ENCODE measurements at regions of chr16 and their contacts with region 1.

Region 1: DNA sequence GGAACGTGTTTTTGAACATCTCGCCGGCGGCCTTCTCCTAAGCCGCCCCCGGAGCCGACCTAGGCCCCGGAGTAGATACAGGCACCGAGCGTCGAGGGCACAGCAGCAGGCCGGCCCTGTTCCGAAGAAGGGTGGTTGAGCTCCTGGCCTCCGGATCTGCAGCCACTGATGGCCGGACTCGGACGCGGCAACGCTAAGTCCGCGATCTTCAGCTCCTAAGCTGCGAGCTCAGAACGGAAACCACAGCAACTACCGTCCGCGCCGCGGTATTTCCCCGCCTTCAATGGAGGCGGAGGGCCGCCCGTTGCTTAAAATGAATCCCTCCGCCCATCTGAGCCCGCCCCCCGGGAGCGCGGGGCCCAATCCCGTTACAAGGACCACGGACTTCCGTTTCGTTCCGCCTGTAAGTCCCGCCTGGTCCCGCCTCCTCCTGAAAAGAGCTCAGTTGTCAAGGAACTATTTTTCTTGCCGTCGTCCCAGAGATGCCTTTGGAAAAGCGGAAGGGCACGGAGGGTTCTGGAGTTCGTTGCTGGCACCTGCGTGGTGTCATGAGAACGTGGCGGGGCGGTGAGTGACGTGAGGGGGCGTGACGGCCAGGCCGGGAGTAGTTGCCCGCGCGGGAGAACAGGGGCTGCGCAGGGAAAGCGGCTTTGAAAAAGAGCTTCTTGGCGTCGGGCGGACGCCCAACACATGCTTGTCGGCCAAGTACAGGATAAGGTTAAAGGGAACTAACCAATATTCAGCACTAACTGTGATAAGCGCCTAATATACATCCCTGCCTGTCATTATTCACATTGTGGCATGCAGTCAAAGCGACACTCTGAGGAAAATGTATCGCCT is at the start of gene CFAP20:
- DNase-seq: peak; percentile 96 to 100 (median 96)
- ATAC-seq: peak; percentile 90
- H3K4me3 ChIP-seq: peak within 1 kb of the TSS; percentile 93
- H3K27ac ChIP-seq: peak within 1 kb of the TSS; percentile 91
- H3K4me1 ChIP-seq: peaks cover 17 to 24% of the 10 kb centered on the region in 2 experiments; a peak in 4 of 5 replicates
- H3K27me3 ChIP-seq: no peaks in the 10 kb centered on the region
- CTCF ChIP-seq: no peak
- EP300 ChIP-seq: peak; percentile 79
- POLR2A ChIP-seq: peak; percentile 86
- RAD21 ChIP-seq: no peak
- polyA plus RNA-seq, gene CFAP20: 20.5 to 30.4 TPM

Region 2: GRCh38 chr16:58011652-58012051 is 117.7 kb before region 1 on chr16:
- CTCF ChIA-PET with region 1: no interaction called
- POLR2A ChIA-PET with region 1: no interaction called
- in situ Hi-C with region 1: loop called (anchors 10 kb)
- intact Hi-C with region 1: no loop called
- DNase-seq: no peak
- ATAC-seq: no peak
- H3K4me3 ChIP-seq: no peak overlapping the region
- H3K27ac ChIP-seq: no peak overlapping the region
- H3K4me1 ChIP-seq: no peaks in the 10 kb centered on the region
- H3K27me3 ChIP-seq: no peaks in the 10 kb centered on the region
- CTCF ChIP-seq: no peak
- EP300 ChIP-seq: no peak
- POLR2A ChIP-seq: no peak
- RAD21 ChIP-seq: no peak

Region 3: DNA sequence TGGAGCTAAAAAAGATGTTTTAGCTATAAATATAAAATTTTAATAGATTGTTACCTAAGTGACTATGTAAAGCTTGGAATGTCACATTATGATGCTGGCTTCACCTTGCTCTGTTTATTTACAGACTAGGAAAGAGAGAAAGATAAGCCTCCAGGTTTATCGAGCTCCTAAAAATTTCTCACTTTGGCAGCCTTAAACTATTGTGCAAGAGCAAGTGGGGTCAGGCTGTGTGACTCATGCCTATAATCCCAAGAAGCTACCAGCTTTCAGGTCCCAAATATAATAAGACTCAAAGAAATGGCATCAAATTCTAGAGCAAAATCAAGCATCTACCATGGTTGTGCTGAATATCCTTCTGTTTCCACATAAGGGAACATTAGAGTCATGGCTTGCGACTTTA is 199.8 kb after region 1 on chr16:
- CTCF ChIA-PET with region 1: no interaction called
- POLR2A ChIA-PET with region 1: no interaction called
- in situ Hi-C with region 1: no loop called
- intact Hi-C with region 1: no loop called
- DNase-seq: no peak
- ATAC-seq: no peak
- H3K4me3 ChIP-seq: no peak overlapping the region
- H3K27ac ChIP-seq: no peak overlapping the region
- H3K4me1 ChIP-seq: no peaks in the 10 kb centered on the region; a peak in 1 of 5 replicates
- H3K27me3 ChIP-seq: peaks cover 2 to 4% of the 10 kb centered on the region in 2 experiments; a peak in 2 of 5 replicates
- CTCF ChIP-seq: no peak
- EP300 ChIP-seq: no peak
- POLR2A ChIP-seq: no peak
- RAD21 ChIP-seq: no peak

Region 4: DNA sequence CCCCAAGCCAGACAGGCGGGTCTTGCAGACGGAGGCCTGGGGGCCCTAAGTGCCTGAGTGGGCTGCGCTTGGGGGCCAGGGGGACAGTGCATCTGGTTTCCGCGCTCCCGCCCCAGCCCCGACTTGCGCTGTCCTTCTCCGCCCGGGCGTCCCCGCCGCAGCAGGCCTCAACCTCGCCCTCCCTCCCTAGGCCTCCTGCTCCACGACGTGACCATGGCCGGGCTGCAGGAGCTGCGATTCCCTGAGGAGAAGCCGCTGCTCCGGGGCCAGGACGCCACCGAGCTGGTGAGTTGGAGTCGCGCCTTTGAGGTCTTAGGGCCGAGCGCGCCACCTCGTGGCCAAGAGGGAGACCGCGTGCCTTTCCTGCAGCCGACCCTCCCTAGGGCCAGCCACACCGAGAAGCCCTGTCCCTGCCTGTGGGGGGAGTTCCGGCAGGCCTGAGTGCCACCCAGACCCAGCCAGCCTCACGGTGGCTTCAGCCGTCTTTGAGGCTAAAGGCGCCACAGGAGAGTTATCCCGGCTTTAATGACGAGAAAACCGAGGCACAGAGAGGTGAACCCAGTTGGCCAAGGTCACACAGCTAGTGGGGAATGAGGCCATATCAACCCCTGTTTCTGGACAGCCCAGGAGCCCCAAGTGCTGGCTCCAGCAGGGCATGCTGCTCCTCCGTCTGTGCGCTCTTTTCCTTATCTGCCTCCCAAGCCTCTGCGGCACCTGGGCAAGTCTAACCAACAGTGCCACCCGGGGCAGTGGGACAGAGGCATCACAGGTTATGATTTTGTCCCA is 358.4 kb after region 1 on chr16:
- CTCF ChIA-PET with region 1: no interaction called
- POLR2A ChIA-PET with region 1: no interaction called
- in situ Hi-C with region 1: no loop called
- intact Hi-C with region 1: loop called (anchors 10 kb)
- DNase-seq: peak; percentile 83 to 87 (median 84)
- ATAC-seq: peak; percentile 97
- H3K4me3 ChIP-seq: no peak overlapping the region
- H3K27ac ChIP-seq: no peak overlapping the region
- H3K4me1 ChIP-seq: peaks cover 10 to 24% of the 10 kb centered on the region in 2 experiments; a peak in 4 of 5 replicates
- H3K27me3 ChIP-seq: peaks cover 0 to 38% of the 10 kb centered on the region in 2 experiments; a peak in 3 of 5 replicates
- CTCF ChIP-seq: peak; percentile 90 to 97 (median 92)
- EP300 ChIP-seq: no peak
- POLR2A ChIP-seq: no peak
- RAD21 ChIP-seq: peak; percentile 94 to 98

Measured in K562 (cell line).